ENCODE measurements at regions of chr1 and their contacts with region 1.

Region 1: GRCh38 chr1:172429331-172430127 is 9.0 kb downstream of the C1orf105 start:
- DNase-seq: peak; percentile 77
- H3K4me3 Mint-ChIP-seq: no peak overlapping the region
- H3K27ac Mint-ChIP-seq: no peak overlapping the region
- H3K4me1 Mint-ChIP-seq: peaks cover 46% of the 10 kb centered on the region
- H3K27me3 Mint-ChIP-seq: no peaks in the 10 kb centered on the region

Region 2: DNA sequence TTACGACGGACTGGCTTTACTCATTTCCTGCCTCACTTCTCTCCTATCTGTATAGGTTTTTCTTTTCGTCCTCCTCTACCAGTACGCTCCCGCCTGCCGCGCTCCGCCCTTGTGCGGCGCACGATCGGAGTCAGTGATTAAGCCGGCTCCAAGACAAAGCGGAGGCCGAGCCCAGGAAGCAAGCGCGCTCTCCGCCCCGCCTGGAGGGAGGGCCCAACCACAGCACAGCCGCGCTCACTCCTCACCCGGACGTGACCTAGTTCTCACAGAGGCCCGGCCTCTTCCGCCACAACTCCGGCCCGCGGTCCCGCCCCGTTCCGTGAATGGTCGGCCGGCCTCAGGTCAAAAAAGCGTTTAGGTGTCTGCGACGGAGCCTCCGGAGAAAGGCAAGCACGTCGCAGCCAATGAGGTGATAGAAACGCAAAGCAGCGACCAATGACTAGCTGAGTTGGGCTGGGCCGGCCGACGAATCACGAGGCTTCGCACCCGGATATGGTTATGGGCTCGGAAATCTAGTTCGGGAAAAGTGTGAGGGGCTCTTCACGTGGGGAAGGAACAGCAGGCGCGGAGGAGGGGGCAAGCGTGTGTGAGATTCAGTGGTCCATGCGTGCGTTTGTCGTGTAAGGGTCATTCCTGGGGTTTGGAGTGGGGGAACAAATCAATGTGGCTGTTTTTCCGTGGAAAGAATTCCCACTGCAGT is 648.2 kb before region 1 on chr1 and contains the start of gene METTL13:
- CTCF ChIA-PET with region 1: no interaction called
- intact Hi-C with region 1: loop called (anchors 10 kb)
- DNase-seq: peak; percentile 99
- H3K4me3 Mint-ChIP-seq: peak within 1 kb of the TSS; percentile 100
- H3K27ac Mint-ChIP-seq: peak within 1 kb of the TSS; percentile 98
- H3K4me1 Mint-ChIP-seq: peaks cover 49% of the 10 kb centered on the region
- H3K27me3 Mint-ChIP-seq: no peaks in the 10 kb centered on the region
- total RNA-seq, gene METTL13: 39.5 to 40.9 TPM

Region 3: DNA sequence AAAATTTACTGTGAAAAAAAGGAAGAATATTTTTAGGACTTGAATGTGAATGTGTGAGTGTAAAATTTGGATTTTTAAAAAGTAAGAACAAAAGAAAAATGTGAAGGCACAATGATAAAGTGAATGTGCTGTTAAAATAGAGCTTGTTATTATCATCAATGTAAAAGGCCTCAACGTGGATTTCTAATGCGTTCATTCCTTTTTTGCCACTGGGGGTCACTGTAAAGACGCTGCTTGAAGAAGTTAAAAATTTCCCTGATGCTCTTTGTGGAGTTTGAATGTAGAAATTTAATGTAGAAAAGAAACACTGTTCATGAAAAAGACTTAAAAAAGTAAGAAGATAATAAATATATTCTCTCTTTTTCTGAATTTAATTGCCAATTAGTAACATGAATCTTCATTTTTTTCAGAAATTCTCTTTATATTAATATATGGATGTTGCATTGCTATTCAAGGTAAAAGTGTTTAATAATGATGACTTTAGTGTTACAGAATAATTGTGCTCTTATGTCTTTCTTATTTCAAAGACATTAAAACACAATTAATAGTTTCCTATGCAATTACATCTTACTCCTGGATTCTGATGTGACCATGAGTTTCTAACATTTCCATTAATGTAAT is 426.7 kb before region 1 on chr1:
- CTCF ChIA-PET with region 1: interaction called, 13 read pairs
- intact Hi-C with region 1: loop called (anchors 1 kb)
- DNase-seq: peak; percentile 39
- H3K4me3 Mint-ChIP-seq: no peak overlapping the region
- H3K27ac Mint-ChIP-seq: no peak overlapping the region
- H3K4me1 Mint-ChIP-seq: peaks cover 4% of the 10 kb centered on the region
- H3K27me3 Mint-ChIP-seq: no peaks in the 10 kb centered on the region

Region 4: DNA sequence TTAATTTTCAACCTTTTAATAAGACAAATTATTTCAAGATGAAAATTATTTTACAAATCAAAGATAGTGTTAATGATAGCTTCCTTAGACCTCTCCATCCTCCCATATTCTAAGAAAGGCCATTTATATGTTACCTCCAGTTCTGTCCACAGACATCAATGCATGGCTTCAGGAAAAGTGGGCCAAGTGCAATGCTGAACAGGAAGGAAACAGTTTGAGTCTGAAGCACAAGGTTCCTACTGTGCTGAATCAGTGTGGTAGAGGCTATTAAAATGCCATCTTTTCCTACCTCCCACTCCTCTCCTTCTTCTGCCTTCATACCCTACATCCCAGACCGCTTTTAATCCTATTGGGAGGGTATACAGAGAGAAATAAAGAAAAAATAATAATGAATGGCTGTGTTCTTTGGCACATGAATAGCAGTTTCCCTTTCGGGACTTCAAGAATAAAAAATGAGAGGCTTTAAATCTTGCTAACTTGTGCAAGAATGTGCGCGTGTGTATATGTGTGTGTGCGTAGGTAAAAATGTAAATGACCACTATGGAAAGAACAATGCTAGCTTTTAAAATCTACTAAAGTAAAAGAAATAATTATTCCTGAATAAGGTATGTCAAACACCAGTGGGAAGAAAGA is 71.7 kb before region 1 on chr1:
- CTCF ChIA-PET with region 1: interaction called, 3 read pairs
- intact Hi-C with region 1: loop called (anchors 2 kb)
- DNase-seq: no peak
- H3K4me3 Mint-ChIP-seq: no peak overlapping the region
- H3K27ac Mint-ChIP-seq: peak overlapping the region; percentile 55
- H3K4me1 Mint-ChIP-seq: peaks cover 64% of the 10 kb centered on the region
- H3K27me3 Mint-ChIP-seq: no peaks in the 10 kb centered on the region

Region 5: DNA sequence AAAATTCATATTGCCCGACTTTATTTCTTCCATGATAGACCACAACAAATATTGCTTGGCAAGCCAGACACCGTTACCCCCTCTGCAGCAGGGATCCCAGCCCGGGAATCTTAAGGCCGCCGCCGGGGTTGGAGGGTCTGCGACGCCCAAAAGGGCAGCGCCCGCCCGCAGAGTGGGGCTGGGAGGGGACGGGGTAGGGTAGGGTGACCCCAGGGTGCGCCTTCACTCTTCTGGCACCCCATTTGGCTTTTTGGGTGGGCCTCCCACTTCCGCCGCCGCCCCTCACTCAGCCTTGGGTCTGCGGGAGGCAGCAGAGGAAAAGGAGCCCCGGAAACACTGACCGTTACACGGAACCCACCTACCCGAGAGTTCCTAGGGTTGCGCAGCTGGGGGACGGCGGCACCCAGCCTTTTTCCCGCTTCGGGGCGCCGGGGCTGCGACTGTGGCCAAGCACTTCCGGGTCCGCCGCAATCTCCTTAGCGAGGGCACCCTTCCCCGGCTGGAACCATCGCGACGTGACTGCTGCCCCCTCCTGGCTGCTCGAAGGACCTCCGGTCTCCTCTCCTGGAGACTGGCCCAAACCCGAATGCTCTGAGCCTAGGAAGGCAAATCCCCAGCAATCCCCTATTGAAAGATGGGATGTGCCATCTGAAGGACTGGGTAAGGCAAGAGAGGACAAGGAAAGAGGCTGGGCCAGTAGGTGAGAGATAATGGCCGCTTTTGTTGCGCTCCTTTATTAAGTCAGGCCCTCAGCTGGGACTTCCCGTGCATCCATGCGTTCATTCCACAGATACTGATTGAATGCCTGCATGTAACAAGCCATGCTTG is 14.3 kb after region 1 on chr1 and contains the start of gene PIGC:
- CTCF ChIA-PET with region 1: interaction called, 88 read pairs
- intact Hi-C with region 1: loop called (anchors 1 kb)
- DNase-seq: peak; percentile 96
- H3K4me3 Mint-ChIP-seq: peak within 1 kb of the TSS; percentile 86
- H3K27ac Mint-ChIP-seq: peak within 1 kb of the TSS; percentile 86
- H3K4me1 Mint-ChIP-seq: peaks cover 35% of the 10 kb centered on the region
- H3K27me3 Mint-ChIP-seq: no peaks in the 10 kb centered on the region
- total RNA-seq, gene PIGC: 17.5 to 18.7 TPM

Region 6: DNA sequence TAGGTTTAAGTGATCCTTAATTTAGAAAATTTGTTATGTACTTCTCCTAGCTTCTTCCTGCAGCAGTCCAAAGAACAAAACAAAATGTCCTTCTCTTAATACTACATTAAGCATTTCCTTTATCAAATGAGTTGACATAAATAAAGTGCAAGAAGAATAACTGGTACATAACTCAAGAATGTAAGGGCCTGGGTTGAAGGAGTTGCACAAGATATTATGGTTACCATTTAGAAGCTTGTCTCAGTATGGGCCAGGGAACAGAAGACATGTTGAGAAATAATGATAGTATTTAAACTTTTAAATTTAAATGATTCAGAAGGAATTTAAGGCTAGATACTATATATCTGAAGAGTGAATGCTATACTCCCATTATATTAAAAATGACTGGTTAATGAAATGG is 126.9 kb after region 1 on chr1:
- CTCF ChIA-PET with region 1: no interaction called
- intact Hi-C with region 1: no loop called
- DNase-seq: no peak
- H3K4me3 Mint-ChIP-seq: no peak overlapping the region
- H3K27ac Mint-ChIP-seq: no peak overlapping the region
- H3K4me1 Mint-ChIP-seq: peaks cover 2% of the 10 kb centered on the region
- H3K27me3 Mint-ChIP-seq: no peaks in the 10 kb centered on the region

Region 7: GRCh38 chr1:172609528-172609927 is 180.0 kb after region 1 on chr1:
- CTCF ChIA-PET with region 1: no interaction called
- intact Hi-C with region 1: loop called (anchors 1 kb)
- DNase-seq: no peak
- H3K4me3 Mint-ChIP-seq: no peak overlapping the region
- H3K27ac Mint-ChIP-seq: no peak overlapping the region
- H3K4me1 Mint-ChIP-seq: peaks cover 2% of the 10 kb centered on the region
- H3K27me3 Mint-ChIP-seq: no peaks in the 10 kb centered on the region

Region 8: GRCh38 chr1:172727956-172728603 is 298.6 kb after region 1 on chr1:
- CTCF ChIA-PET with region 1: interaction called, 6 read pairs
- intact Hi-C with region 1: loop called (anchors 1 kb)
- DNase-seq: peak; percentile 71
- H3K4me3 Mint-ChIP-seq: no peak overlapping the region
- H3K27ac Mint-ChIP-seq: no peak overlapping the region
- H3K4me1 Mint-ChIP-seq: peaks cover 17% of the 10 kb centered on the region
- H3K27me3 Mint-ChIP-seq: no peaks in the 10 kb centered on the region

Measured in activated naive CD4-positive, alpha-beta T cell treated with anti-CD3 and anti-CD28 coated beads for 36 hours (primary cell).